ENCODE measurements at regions of chr5 and their contacts with region 1.

Region 1: GRCh38 chr5:53095931-53096525 is 13.5 kb downstream of the MOCS2 start:
- DNase-seq: peak in 4 of 5 donors; percentile 39 to 76 (median 51)
- H3K4me3 ChIP-seq: no peak overlapping the region
- H3K27ac ChIP-seq: no peak overlapping the region
- H3K4me1 ChIP-seq: no peaks in the 10 kb centered on the region
- H3K27me3 ChIP-seq: no peaks in the 10 kb centered on the region
- CTCF ChIP-seq: peak; percentile 35 to 80 (median 74)
- EP300 ChIP-seq: no peak
- POLR2A ChIP-seq: no peak

Region 2: DNA sequence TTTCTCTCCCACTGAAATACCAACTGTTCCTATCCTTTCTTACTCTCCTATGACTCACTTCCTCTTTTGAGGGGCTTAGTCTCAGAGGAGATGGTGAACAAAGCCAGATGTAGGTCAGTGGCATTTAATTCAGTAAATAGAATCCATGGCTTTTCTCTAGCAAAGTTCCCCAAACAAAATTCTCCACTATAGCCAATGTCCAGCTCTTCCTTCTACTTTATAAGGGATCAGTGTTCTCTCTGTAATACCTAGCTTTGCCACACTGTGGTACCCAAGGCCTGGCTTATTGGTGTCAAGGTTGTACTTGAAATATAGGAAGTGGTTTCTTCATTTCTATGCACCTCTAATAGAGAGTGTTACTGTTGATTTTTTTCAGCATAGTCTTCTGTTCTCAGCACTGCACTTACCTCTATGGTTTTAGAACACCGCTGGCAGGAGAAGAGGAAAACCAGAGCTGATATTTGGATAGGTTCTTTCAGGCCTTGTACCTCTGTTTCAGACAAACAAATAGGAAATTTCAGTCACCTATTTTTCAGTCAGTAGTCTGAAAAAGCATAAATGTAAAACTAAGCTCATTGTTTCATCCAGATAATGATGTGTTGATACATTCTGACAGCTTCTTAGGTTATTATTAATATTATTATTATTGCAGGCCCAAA is 147.5 kb before region 1 on chr5:
- intact Hi-C with region 1: loop called (anchors 5 to 10 kb)
- DNase-seq: peak; percentile 29 to 61 (median 36)
- H3K4me3 ChIP-seq: no peak overlapping the region
- H3K27ac ChIP-seq: no peak overlapping the region
- H3K4me1 ChIP-seq: no peaks in the 10 kb centered on the region
- H3K27me3 ChIP-seq: no peaks in the 10 kb centered on the region
- CTCF ChIP-seq: peak; percentile 9 to 70 (median 63)
- EP300 ChIP-seq: no peak
- POLR2A ChIP-seq: no peak

Region 3: DNA sequence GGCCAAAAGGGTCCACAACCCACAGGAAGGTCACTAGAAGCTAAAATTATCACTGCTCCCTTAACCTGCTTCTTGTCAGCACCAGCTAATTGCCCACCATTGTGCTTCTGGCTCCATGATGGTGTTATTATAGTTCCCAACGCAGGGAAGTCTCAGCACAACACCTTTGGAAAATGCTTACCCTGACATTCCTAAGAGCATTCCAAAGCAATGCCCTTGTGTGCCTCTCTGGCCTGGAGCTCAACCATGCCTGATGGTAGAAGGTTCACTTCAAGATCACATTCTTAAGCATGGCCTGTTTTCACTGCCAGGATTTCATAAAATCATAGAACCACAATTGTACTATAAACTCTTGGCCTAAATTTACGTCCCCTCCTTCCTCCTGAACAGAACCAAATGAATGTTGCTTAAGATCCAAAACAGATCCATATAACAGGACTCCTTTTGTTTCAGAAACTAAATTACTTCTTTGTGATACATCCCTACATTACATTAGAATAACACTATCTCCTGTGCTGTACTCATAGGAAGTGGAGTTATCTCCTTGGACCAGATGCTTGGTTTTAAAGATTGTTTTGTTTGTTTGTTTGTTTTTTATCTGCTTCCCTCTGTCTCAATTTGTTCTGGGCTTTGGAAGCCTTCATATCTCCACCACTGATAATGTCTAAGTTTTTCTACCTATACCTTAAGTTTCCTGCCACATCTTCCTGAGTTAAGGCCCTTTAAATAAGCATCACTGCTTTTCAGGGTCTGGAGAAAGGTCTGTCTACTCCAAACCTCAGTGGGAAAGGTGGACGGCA is 1182.2 kb after region 1 on chr5:
- intact Hi-C with region 1: no loop called
- DNase-seq: no peak
- H3K4me3 ChIP-seq: no peak overlapping the region
- H3K27ac ChIP-seq: no peak overlapping the region
- H3K4me1 ChIP-seq: no peaks in the 10 kb centered on the region
- H3K27me3 ChIP-seq: no peaks in the 10 kb centered on the region
- CTCF ChIP-seq: no peak
- EP300 ChIP-seq: no peak
- POLR2A ChIP-seq: no peak